ENCODE measurements at regions of chr7 and their contacts with region 1.

Region 1: DNA sequence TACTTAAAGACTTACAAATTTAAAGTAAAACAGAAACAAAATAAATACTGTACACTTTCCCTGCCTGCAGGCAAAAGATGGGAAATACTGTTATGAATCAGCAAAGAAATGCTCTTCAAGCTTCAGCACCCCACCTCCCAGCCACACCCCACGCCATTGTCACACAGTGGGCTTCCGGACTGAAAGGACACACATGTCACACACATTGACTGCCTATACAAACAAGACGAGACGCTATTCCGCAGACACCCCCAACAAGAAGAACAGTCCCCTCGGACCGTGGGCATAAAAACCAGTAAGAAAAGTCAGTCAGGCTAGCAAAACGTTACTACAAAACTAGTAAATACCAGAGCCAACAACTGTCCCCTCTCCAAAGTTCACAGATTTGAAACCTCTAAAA is 22.2 kb upstream of the PARP12 start:
- DNase-seq: peak; percentile 36
- H3K4me3 Mint-ChIP-seq: peak overlapping the region; percentile 9
- H3K27ac Mint-ChIP-seq: peak overlapping the region; percentile 76
- H3K4me1 Mint-ChIP-seq: peaks cover 39% of the 10 kb centered on the region
- H3K27me3 Mint-ChIP-seq: no peaks in the 10 kb centered on the region

Region 2: GRCh38 chr7:140121326-140121725 is 36.4 kb after region 1 on chr7:
- intact Hi-C with region 1: loop called (anchors 5 kb)
- DNase-seq: no peak
- H3K4me3 Mint-ChIP-seq: no peak overlapping the region
- H3K27ac Mint-ChIP-seq: no peak overlapping the region
- H3K4me1 Mint-ChIP-seq: peaks cover 25% of the 10 kb centered on the region
- H3K27me3 Mint-ChIP-seq: no peaks in the 10 kb centered on the region

Region 3: DNA sequence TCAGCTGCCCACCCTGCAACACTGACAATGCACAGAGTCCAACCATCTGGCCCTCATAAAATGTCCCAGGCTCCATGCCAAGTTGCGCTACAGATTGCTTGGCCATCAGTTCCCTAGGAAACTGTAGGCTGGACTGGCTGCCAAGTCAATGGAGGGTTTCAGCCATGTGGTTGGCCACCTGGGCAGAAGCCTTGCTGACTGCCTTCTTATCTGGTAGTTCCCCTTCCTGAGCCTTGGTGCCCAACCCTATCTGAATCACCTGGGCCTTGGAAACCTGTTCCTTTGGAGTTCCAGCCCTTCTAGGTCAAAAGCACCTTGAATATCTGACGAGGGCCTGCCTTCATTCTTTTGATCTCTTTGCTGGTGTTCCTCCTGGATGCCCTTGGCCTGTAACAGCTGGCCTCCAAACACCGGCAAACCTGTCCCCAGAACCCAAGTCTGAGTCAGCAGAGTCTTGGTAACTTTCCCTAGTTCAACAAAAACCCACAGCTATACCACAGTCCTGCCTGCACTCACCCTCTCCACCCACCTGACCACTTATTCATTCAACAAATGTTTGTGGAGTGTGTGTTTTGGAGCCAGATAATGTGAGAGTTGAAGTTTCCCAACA is 129.2 kb after region 1 on chr7:
- intact Hi-C with region 1: no loop called
- DNase-seq: no peak
- H3K4me3 Mint-ChIP-seq: peak overlapping the region; percentile 25
- H3K27ac Mint-ChIP-seq: peak overlapping the region; percentile 71
- H3K4me1 Mint-ChIP-seq: peaks cover 58% of the 10 kb centered on the region
- H3K27me3 Mint-ChIP-seq: no peaks in the 10 kb centered on the region